ENCODE measurements at regions of chr2 and their contacts with region 1.

Region 1: GRCh38 chr2:197209742-197210408 is 100.7 kb downstream of the ANKRD44 start:
- DNase-seq: peak; percentile 49
- H3K4me3 Mint-ChIP-seq: peak overlapping the region; percentile 50
- H3K27ac Mint-ChIP-seq: peak overlapping the region; percentile 89
- H3K4me1 Mint-ChIP-seq: peaks cover 98% of the 10 kb centered on the region
- H3K27me3 Mint-ChIP-seq: no peaks in the 10 kb centered on the region

Region 2: DNA sequence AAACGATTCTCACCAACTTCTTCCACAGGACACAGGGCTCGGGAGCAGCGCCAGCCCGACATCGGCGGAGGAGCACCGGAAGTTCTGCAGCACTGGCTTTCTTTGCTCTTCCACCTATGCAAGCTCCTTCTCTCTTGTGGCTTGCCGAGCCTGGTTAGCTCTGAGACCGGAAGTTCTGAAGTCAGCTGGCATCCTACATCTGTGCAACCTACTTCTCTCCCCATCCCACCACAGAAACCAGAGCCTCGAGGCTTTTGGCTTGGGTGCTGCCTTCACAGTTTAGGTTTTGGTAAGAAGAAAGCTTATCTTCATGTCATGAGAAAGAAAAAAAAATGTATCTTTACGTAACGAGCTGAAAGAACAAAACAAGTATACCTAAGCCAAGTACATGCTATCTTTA is 11.0 kb before region 1 on chr2:
- CTCF ChIA-PET with region 1: interaction called, 16 read pairs
- POLR2A ChIA-PET with region 1: no interaction called
- DNase-seq: peak; percentile 96
- H3K4me3 Mint-ChIP-seq: peak overlapping the region; percentile 82
- H3K27ac Mint-ChIP-seq: peak overlapping the region; percentile 94
- H3K4me1 Mint-ChIP-seq: peaks cover 90% of the 10 kb centered on the region
- H3K27me3 Mint-ChIP-seq: no peaks in the 10 kb centered on the region

Region 3: GRCh38 chr2:197239434-197239833 is 29.6 kb after region 1 on chr2:
- CTCF ChIA-PET with region 1: interaction called, 13 read pairs
- POLR2A ChIA-PET with region 1: interaction called, 14 read pairs
- DNase-seq: no peak
- H3K4me3 Mint-ChIP-seq: peak overlapping the region; percentile 76
- H3K27ac Mint-ChIP-seq: peak overlapping the region; percentile 92
- H3K4me1 Mint-ChIP-seq: peaks cover 85% of the 10 kb centered on the region
- H3K27me3 Mint-ChIP-seq: no peaks in the 10 kb centered on the region

Region 4: GRCh38 chr2:197339496-197340220 is 129.8 kb after region 1 on chr2:
- CTCF ChIA-PET with region 1: no interaction called
- POLR2A ChIA-PET with region 1: no interaction called
- DNase-seq: no peak
- H3K4me3 Mint-ChIP-seq: no peak overlapping the region
- H3K27ac Mint-ChIP-seq: no peak overlapping the region
- H3K4me1 Mint-ChIP-seq: peaks cover 10% of the 10 kb centered on the region
- H3K27me3 Mint-ChIP-seq: no peaks in the 10 kb centered on the region